ENCODE measurements at regions of chr10 and their contacts with region 1.

Region 1: GRCh38 chr10:50990568-50991185 is 83.6 kb upstream of the PRKG1 start:
- DNase-seq: peak; percentile 53 to 75
- ATAC-seq: peak; percentile 28

Region 2: GRCh38 chr10:52215745-52216361 is 1225.2 kb after region 1 on chr10:
- intact Hi-C with region 1: loop called in 1 of 2 experiments (anchors 10 kb)
- DNase-seq: peak in 1 of 2 donors; percentile 21
- ATAC-seq: peak; percentile 66